ENCODE measurements at regions of chr2 and their contacts with region 1.

Region 1: GRCh38 chr2:233832869-233833311 is 21.4 kb downstream of the HJURP start:
- DNase-seq: peak; percentile 69
- H3K4me3 Mint-ChIP-seq: no peak overlapping the region
- H3K27ac Mint-ChIP-seq: no peak overlapping the region
- H3K4me1 Mint-ChIP-seq: peaks cover 14% of the 10 kb centered on the region
- H3K27me3 Mint-ChIP-seq: no peaks in the 10 kb centered on the region
- CTCF ChIP-seq: peak; percentile 66

Region 2: GRCh38 chr2:233404222-233404621 is 428.7 kb before region 1 on chr2:
- CTCF ChIA-PET with region 1: interaction called, 4 read pairs
- intact Hi-C with region 1: loop called (anchors 5 kb)
- DNase-seq: peak; percentile 63
- H3K4me3 Mint-ChIP-seq: no peak overlapping the region
- H3K27ac Mint-ChIP-seq: peak overlapping the region; percentile 19
- H3K4me1 Mint-ChIP-seq: peaks cover 22% of the 10 kb centered on the region
- H3K27me3 Mint-ChIP-seq: no peaks in the 10 kb centered on the region
- CTCF ChIP-seq: peak; percentile 67

Region 3: DNA sequence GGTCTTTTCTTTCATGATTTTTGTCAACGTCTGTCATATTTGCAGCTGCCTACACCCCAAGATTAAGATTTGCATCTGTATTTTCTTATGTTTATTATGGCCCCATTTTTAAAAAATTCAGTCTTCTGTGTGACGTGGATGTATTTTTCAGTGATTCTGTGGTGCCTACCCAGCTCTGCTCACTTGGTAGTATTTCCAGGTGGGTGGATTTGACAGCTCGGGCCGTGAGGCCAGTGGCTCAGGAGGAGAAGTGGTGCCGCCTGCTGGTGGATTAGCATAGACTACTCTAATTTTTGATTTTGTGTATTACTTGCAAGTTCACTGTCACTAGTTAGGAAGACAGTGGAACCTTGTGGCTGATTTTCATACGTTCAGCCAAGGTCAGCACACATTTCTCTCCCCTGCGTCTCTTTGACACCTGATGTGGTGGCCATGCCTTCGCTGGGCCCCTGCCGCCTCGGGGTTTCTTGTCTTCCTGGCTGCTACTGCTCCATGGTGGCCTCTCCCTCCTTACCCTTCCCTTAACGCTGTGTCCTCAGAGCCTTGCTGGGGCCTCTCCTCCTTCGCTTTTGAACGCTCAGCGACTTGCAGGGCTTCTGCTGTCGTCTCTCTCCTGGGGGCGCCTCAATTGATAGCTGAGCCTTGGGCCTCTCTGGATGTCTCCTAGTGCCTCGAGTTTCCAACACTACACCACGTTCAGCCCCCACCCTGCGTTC is 389.3 kb before region 1 on chr2:
- CTCF ChIA-PET with region 1: interaction called, 8 read pairs
- intact Hi-C with region 1: loop called (anchors 10 kb)
- DNase-seq: peak; percentile 84
- H3K4me3 Mint-ChIP-seq: no peak overlapping the region
- H3K27ac Mint-ChIP-seq: no peak overlapping the region
- H3K4me1 Mint-ChIP-seq: peaks cover 13% of the 10 kb centered on the region
- H3K27me3 Mint-ChIP-seq: no peaks in the 10 kb centered on the region
- CTCF ChIP-seq: peak; percentile 83

Region 4: GRCh38 chr2:233566141-233566960 is 266.5 kb before region 1 on chr2 and contains the start of gene USP40:
- CTCF ChIA-PET with region 1: no interaction called
- intact Hi-C with region 1: loop called (anchors 10 kb)
- DNase-seq: peak; percentile 88
- H3K4me3 Mint-ChIP-seq: peak within 1 kb of the TSS; percentile 97
- H3K27ac Mint-ChIP-seq: peak within 1 kb of the TSS; percentile 89
- H3K4me1 Mint-ChIP-seq: no peaks in the 10 kb centered on the region
- H3K27me3 Mint-ChIP-seq: no peaks in the 10 kb centered on the region
- CTCF ChIP-seq: no peak
- total RNA-seq, gene USP40: 44.2 and 45.8 TPM in 2 replicates

Region 5: GRCh38 chr2:233643128-233643527 is 189.8 kb before region 1 on chr2:
- CTCF ChIA-PET with region 1: no interaction called
- intact Hi-C with region 1: loop called (anchors 5 kb)
- DNase-seq: peak; percentile 63
- H3K4me3 Mint-ChIP-seq: no peak overlapping the region
- H3K27ac Mint-ChIP-seq: peak overlapping the region; percentile 18
- H3K4me1 Mint-ChIP-seq: peaks cover 42% of the 10 kb centered on the region
- H3K27me3 Mint-ChIP-seq: no peaks in the 10 kb centered on the region
- CTCF ChIP-seq: peak; percentile 53

Region 6: GRCh38 chr2:233674995-233675394 is 157.9 kb before region 1 on chr2:
- CTCF ChIA-PET with region 1: no interaction called
- intact Hi-C with region 1: no loop called
- DNase-seq: no peak
- H3K4me3 Mint-ChIP-seq: no peak overlapping the region
- H3K27ac Mint-ChIP-seq: no peak overlapping the region
- H3K4me1 Mint-ChIP-seq: peaks cover 15% of the 10 kb centered on the region
- H3K27me3 Mint-ChIP-seq: no peaks in the 10 kb centered on the region
- CTCF ChIP-seq: no peak

Region 7: GRCh38 chr2:233700028-233700635 is 132.8 kb before region 1 on chr2:
- CTCF ChIA-PET with region 1: no interaction called
- intact Hi-C with region 1: loop called (anchors 10 kb)
- DNase-seq: peak; percentile 44
- H3K4me3 Mint-ChIP-seq: peak overlapping the region; percentile 65
- H3K27ac Mint-ChIP-seq: peak overlapping the region; percentile 65
- H3K4me1 Mint-ChIP-seq: peaks cover 86% of the 10 kb centered on the region
- H3K27me3 Mint-ChIP-seq: no peaks in the 10 kb centered on the region
- CTCF ChIP-seq: no peak